Naive thymus-derived CD4-positive, alpha-beta T cell (primary cell): ENCODE measurements at regions of chr1 and their contacts with region 1.

Region 1: GRCh38 chr1:193121616-193122593 is at the start of gene CDC73:
- DNase-seq: peak; percentile 97 to 100 (median 99)
- ATAC-seq: peak; percentile 96
- H3K4me3 ChIP-seq: peak within 1 kb of the TSS; percentile 85
- H3K4me3 Mint-ChIP-seq: peak within 1 kb of the TSS; percentile 88 to 99 (median 95)
- H3K27ac ChIP-seq: peak within 1 kb of the TSS; percentile 91
- H3K27ac Mint-ChIP-seq: peak within 1 kb of the TSS; percentile 92 to 98 (median 96)
- H3K4me1 ChIP-seq: peaks cover 21 to 25% of the 10 kb centered on the region in 2 donors
- H3K4me1 Mint-ChIP-seq: peaks cover 33 to 68% (median 47%) of the 10 kb centered on the region in 7 donors
- H3K27me3 ChIP-seq: no peaks in the 10 kb centered on the region
- H3K27me3 Mint-ChIP-seq: peaks cover 0 to 11% (median 0%) of the 10 kb centered on the region in 5 donors
- total RNA-seq, gene CDC73: 57.6 to 65.0 (median 58.8) TPM

Region 2: DNA sequence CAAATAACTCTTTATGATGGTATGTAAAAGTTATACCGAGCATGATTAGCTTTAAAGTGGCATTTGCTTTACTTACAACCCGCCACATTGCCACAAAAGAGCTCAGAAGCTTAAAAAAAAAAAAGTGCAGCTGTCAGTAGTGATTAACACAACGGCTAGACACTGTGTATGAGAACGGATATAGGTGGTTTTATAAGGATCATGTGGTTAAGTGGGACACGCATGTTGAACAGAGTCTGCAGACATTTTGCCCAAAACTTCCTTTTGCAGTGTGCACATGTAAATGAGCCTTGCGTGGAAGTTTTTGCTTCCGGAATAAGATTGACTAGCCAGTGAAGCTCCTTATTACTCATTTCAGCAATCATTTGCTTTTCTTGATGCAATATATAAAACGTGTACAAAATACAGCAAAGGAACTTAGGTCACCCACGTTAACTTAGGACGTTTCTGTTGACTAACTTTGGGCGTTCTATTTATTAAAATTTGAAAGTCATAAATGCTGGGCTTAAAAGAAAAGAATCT is 605.1 kb before region 1 on chr1:
- CTCF ChIA-PET with region 1: no interaction called
- POLR2A ChIA-PET with region 1: no interaction called
- intact Hi-C with region 1: loop called in 1 of 2 experiments (anchors 5 kb)
- DNase-seq: peak in 8 of 9 donors; percentile 46 to 91 (median 87)
- ATAC-seq: peak; percentile 96
- H3K4me3 ChIP-seq: peak overlapping the region; percentile 27
- H3K4me3 Mint-ChIP-seq: peak overlapping the region; percentile 42 to 86 (median 78)
- H3K27ac ChIP-seq: peak overlapping the region; percentile 60
- H3K27ac Mint-ChIP-seq: peak overlapping the region; percentile 77 to 98 (median 93)
- H3K4me1 ChIP-seq: peaks cover 18 to 21% of the 10 kb centered on the region in 2 donors
- H3K4me1 Mint-ChIP-seq: peaks cover 32 to 56% (median 44%) of the 10 kb centered on the region in 7 donors
- H3K27me3 ChIP-seq: no peaks in the 10 kb centered on the region
- H3K27me3 Mint-ChIP-seq: no peaks in the 10 kb centered on the region

Region 3: GRCh38 chr1:192609110-192610079 is 512.5 kb before region 1 on chr1:
- CTCF ChIA-PET with region 1: no interaction called
- POLR2A ChIA-PET with region 1: no interaction called
- intact Hi-C with region 1: loop called in 1 of 2 experiments (anchors 5 kb)
- DNase-seq: peak; percentile 30 to 80 (median 69)
- ATAC-seq: peak; percentile 96
- H3K4me3 ChIP-seq: peak overlapping the region; percentile 3
- H3K4me3 Mint-ChIP-seq: peak overlapping the region; percentile 52 to 81 (median 65)
- H3K27ac ChIP-seq: peak overlapping the region; percentile 14
- H3K27ac Mint-ChIP-seq: peak overlapping the region; percentile 54 to 91 (median 86)
- H3K4me1 ChIP-seq: peaks cover 10 to 14% of the 10 kb centered on the region in 2 donors
- H3K4me1 Mint-ChIP-seq: peaks cover 12 to 16% (median 15%) of the 10 kb centered on the region in 7 donors
- H3K27me3 ChIP-seq: no peaks in the 10 kb centered on the region
- H3K27me3 Mint-ChIP-seq: peaks cover 0 to 2% (median 0%) of the 10 kb centered on the region in 5 donors

Region 4: DNA sequence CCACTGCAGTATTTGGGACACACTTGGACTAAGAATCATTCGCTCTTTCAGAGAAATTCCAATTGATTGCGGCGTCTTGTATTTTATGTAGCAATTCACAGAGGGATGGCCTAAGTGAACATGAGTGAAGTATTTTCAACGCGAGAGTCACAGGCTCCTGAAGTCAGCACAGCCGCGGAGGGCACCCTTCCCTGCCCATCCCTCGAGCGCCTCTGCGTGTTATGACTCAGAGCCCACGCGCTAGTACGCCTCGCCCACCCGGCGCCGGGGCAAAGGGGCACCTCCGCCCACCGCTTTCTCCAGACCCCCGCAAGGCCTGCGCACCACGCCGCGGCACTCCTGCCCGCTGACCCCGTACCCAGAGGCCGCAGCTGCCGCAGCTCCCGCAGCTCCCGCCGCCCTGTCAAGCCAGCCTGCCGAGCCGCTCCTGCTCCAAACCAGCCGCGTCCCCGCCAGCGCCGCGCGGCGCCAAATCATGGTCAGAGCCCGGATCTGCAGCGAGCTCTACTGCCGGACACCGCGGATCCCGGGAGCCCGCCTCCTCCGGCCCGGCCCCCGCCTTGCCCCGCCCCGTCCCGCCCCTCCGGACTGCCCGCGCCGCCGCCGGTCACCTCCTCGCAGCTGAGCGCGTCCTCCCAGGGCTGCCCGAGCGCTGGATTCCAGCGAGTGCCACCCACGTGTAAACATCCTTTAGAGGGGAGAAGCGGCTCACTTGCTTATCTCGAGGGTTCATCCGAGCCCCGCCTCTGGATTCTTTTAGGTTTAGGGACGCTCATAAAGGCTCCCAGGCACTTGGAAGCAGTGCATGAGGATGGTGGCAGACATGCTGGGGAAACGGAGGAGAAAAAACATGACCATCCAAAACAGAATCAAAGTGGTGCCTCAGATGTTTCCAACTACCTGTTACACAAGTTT is 16.7 kb before region 1 on chr1 and contains the start of gene GLRX2:
- CTCF ChIA-PET with region 1: interaction called, 3 read pairs
- POLR2A ChIA-PET with region 1: interaction called, 18 read pairs
- intact Hi-C with region 1: loop called (anchors 1 kb)
- DNase-seq: peak; percentile 30 to 68 (median 48)
- ATAC-seq: peak; percentile 91
- H3K4me3 ChIP-seq: peak within 1 kb of the TSS; percentile 67
- H3K4me3 Mint-ChIP-seq: peak within 1 kb of the TSS; percentile 91 to 98 (median 94)
- H3K27ac ChIP-seq: peak within 1 kb of the TSS; percentile 57
- H3K27ac Mint-ChIP-seq: peak within 1 kb of the TSS; percentile 75 to 94 (median 81)
- H3K4me1 ChIP-seq: peaks cover 3 to 16% of the 10 kb centered on the region in 2 donors
- H3K4me1 Mint-ChIP-seq: peaks cover 13 to 28% (median 21%) of the 10 kb centered on the region in 7 donors
- H3K27me3 ChIP-seq: no peaks in the 10 kb centered on the region
- H3K27me3 Mint-ChIP-seq: peaks cover 0 to 9% (median 0%) of the 10 kb centered on the region in 5 donors
- total RNA-seq, gene GLRX2: 6.8 to 18.8 (median 11.4) TPM

Region 5: GRCh38 chr1:193299038-193299437 is 177.1 kb after region 1 on chr1:
- CTCF ChIA-PET with region 1: no interaction called
- POLR2A ChIA-PET with region 1: no interaction called
- intact Hi-C with region 1: no loop called
- DNase-seq: no peak
- ATAC-seq: no peak
- H3K4me3 ChIP-seq: no peak overlapping the region
- H3K4me3 Mint-ChIP-seq: no peak overlapping the region
- H3K27ac ChIP-seq: no peak overlapping the region
- H3K27ac Mint-ChIP-seq: no peak overlapping the region
- H3K4me1 ChIP-seq: no peaks in the 10 kb centered on the region
- H3K4me1 Mint-ChIP-seq: no peaks in the 10 kb centered on the region
- H3K27me3 ChIP-seq: no peaks in the 10 kb centered on the region
- H3K27me3 Mint-ChIP-seq: peaks cover 0 to 7% (median 0%) of the 10 kb centered on the region in 5 donors

Region 6: GRCh38 chr1:194289569-194290266 is 1167.8 kb after region 1 on chr1:
- CTCF ChIA-PET with region 1: no interaction called
- POLR2A ChIA-PET with region 1: no interaction called
- intact Hi-C with region 1: loop called in 1 of 2 experiments (anchors 1 kb)
- DNase-seq: peak in 8 of 9 donors; percentile 23 to 84 (median 76)
- ATAC-seq: peak; percentile 97
- H3K4me3 ChIP-seq: peak overlapping the region; percentile 0
- H3K4me3 Mint-ChIP-seq: peak overlapping the region; percentile 38 to 71 (median 54)
- H3K27ac ChIP-seq: no peak overlapping the region
- H3K27ac Mint-ChIP-seq: peak overlapping the region in 7 of 9 donors; percentile 43 to 84 (median 69)
- H3K4me1 ChIP-seq: peaks cover 14 to 21% of the 10 kb centered on the region in 2 donors
- H3K4me1 Mint-ChIP-seq: peaks cover 5 to 47% (median 40%) of the 10 kb centered on the region in 7 donors
- H3K27me3 ChIP-seq: no peaks in the 10 kb centered on the region
- H3K27me3 Mint-ChIP-seq: no peaks in the 10 kb centered on the region